Psoas muscle (tissue), 8 donors: ENCODE measurements at regions of chr7 and their contacts with region 1.

Region 1: GRCh38 chr7:140230861-140231770 is 54.3 kb upstream of the KDM7A start:
- DNase-seq: peak; percentile 44 to 58
- ATAC-seq: peak; percentile 46 to 61 (median 52)
- H3K4me3 ChIP-seq: peak overlapping the region; percentile 67
- H3K27ac ChIP-seq: peak overlapping the region; percentile 41
- H3K4me1 ChIP-seq: peaks cover 4% of the 10 kb centered on the region
- H3K27me3 ChIP-seq: peaks cover 0 to 51% (median 15%) of the 10 kb centered on the region in 3 donors
- CTCF ChIP-seq: no peak

Region 2: GRCh38 chr7:140136073-140136472 is 95.0 kb before region 1 on chr7:
- intact Hi-C with region 1: no loop called
- DNase-seq: no peak
- ATAC-seq: no peak
- H3K4me3 ChIP-seq: no peak overlapping the region
- H3K27ac ChIP-seq: no peak overlapping the region
- H3K4me1 ChIP-seq: no peaks in the 10 kb centered on the region
- H3K27me3 ChIP-seq: no peaks in the 10 kb centered on the region
- CTCF ChIP-seq: no peak

Region 3: DNA sequence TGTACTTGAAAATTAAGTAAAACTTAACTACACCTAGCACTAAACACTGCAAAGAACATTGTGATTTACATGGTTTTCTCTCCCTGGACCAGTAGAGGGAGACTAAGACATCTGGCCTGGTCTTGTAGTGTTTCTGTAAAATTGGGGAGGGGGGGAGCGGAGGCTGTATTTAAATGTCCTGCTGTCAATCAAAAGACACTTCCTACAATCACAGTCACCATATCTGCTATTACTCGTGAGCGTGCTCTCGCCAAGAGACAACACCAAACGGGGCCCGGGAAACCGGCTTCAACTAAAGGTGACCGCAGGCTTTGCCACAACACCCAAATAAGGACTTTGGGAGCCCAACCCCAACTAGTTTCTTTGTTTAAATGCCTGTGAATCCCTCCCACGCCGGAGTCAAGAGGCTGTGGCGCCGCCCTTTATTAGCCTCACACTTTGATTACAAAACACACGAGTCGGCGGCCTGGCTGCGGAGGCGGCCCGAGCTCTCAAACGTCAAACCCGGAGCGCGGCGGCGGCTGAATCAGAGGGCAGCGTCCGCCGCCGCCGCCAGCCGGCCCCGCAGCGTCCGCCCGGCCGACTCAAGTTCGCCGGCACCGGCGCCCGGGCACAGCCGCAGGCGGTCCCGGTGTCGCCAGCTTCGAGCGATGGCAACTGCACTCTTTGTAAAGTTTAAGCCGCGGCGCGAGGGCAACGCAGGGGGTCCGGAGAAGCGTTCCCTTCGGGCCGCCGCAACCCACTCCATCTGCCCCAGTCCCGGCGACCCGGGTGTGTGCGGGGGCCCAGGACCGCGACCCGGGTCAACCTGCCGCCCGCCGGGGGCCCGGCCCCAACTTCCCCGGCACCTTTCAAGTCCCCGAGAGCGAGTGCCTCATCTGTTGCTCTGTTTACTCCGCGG is 55.6 kb before region 1 on chr7:
- intact Hi-C with region 1: loop called in 1 of 2 experiments (anchors 5 kb)
- DNase-seq: peak; percentile 93 to 94
- ATAC-seq: peak; percentile 74 to 85 (median 80)
- H3K4me3 ChIP-seq: peak overlapping the region; percentile 93
- H3K27ac ChIP-seq: peak overlapping the region; percentile 99
- H3K4me1 ChIP-seq: peaks cover 19% of the 10 kb centered on the region
- H3K27me3 ChIP-seq: no peaks in the 10 kb centered on the region
- CTCF ChIP-seq: peak; percentile 67

Region 4: DNA sequence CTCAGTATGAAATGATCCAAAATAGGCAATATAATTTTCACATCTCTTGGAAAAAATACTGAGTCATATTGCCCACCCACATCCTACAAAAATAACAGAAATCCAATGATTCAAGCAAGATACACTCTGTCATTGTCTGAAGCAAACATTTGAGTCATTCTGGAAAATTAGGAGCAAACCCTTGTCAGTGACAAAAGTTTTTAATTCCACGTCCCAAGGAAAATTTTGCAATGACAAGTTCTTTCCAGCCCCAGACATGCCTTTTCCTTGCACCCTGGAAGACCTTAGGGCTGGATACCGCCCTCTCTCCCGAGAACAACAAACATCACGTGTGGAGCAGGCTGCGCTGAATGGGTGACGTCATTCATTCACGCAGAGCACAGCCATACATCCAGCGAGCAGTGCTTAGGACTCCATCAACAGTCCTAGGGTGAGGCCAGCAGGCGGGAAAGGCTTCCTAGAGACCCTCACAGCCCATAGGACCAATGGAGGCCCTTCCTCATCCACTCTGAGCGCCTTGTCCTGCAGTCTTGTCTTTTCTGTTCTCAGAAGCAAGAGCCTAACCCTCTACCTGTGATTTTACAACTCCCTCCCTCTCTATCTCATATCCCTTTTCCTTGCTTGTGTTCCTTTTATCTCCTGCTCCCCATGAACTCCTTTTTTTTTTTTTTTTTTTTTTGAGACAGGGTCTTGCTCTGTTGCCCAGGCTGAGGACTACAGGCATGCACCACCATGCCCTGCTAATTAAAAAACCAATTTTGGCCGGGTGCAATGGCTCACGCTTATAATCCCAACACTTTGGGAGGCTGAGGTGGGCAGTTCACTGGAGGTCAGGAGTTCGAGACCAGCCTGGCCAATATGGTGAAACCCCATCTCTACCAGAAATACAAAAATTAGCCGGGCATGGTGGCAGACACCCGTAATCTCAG is 30.8 kb before region 1 on chr7:
- intact Hi-C with region 1: no loop called
- DNase-seq: peak; percentile 37 to 59
- ATAC-seq: peak in 2 of 4 donors; percentile 49 to 55
- H3K4me3 ChIP-seq: no peak overlapping the region
- H3K27ac ChIP-seq: no peak overlapping the region
- H3K4me1 ChIP-seq: no peaks in the 10 kb centered on the region
- H3K27me3 ChIP-seq: no peaks in the 10 kb centered on the region
- CTCF ChIP-seq: no peak

Region 5: DNA sequence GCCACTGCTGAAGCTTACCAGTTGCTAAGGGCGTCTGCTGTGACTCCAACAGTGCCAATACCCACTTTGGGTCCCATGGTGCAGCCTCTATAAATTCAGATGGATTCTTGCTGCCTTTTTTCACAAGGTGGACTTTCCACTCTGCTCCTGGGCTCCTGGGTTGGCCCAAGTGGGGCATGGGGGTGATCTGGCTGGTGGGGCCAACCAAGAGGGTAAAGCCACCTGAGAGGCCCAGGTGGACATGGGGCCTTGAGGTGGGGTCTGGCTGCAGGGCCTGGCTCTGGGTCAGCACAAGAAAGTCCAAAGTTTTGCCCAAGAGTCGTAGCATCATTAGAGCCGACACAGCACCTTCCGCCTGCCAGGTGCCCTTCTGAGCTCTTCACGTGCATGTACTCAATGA is 50.8 kb after region 1 on chr7:
- intact Hi-C with region 1: loop called in 1 of 2 experiments (anchors 2 kb)
- DNase-seq: no peak
- ATAC-seq: no peak
- H3K4me3 ChIP-seq: no peak overlapping the region
- H3K27ac ChIP-seq: no peak overlapping the region
- H3K4me1 ChIP-seq: no peaks in the 10 kb centered on the region
- H3K27me3 ChIP-seq: peaks cover 0 to 6% (median 0%) of the 10 kb centered on the region in 3 donors
- CTCF ChIP-seq: no peak

Region 6: DNA sequence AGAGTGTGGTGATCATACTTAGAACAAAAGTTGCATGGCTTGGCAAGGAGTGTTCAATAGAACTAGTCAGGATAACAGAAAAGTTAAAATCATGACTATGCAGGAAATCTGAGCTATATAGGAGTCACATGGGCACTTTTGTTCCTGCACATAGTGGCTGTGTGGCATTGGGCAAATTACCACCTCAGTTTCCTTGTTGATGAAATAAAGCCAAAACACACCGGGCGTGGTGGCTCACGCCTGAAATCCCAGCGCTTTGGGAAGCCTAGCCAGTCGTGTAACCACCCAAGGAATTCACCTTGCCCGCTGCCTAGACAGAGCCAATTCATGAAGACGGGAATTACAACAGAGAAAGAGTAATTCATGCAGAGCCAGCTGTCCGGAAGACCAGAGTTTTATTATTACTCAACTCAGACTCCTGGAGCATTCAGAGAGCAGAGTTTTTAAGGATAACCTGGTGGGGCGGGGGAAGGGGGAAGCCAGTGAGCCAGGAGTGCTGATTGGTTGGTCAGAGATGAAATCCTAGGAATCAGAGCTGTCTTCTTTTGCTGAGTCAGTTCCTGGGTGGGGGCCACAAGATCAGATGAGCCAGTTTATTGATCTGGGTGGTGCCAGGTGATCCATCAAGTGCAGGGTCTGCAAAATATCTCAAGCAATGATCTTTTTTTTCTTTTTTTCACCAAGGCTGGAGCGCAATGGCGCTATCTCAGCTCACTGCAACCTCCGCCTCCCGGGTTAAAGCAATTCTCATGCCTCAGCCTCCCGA is 254.6 kb after region 1 on chr7:
- intact Hi-C with region 1: no loop called
- DNase-seq: peak in 1 of 2 donors; percentile 4
- ATAC-seq: no peak
- H3K4me3 ChIP-seq: no peak overlapping the region
- H3K27ac ChIP-seq: no peak overlapping the region
- H3K4me1 ChIP-seq: no peaks in the 10 kb centered on the region
- H3K27me3 ChIP-seq: no peaks in the 10 kb centered on the region
- CTCF ChIP-seq: no peak